ENCODE measurements at regions of chr11 and their contacts with region 1.

Region 1: DNA sequence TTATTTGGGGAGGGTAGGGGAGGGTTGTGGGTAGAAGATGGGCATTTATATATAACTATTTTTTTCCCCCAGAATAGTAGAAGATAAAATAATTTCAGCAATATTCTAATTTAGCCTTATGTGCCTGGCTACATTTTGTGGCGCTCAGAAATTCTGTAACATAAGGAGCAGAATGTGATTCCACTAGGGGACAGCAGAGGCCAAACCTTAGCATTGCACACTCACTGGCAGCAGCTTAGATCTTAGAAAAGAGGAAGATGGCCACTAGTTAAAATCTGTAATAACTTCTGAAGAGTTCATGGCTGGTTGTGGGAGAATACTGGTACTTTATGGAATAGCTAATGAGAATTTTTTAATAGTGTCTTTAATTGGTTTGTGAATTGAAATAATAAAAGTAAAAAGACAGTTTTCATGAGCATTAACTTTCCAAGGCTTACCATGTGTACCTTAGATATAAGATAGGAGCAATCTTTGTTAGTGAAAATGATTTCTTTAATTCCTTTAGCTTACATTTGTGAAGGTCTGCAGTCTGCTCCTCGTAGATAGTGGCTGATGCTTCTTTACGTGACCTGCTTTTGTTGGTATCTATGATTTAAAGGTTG is 33.1 kb downstream of the DDX10 start:
- DNase-seq: peak in 6 of 14 experiments; percentile 16 to 56 (median 33)
- ATAC-seq: peak; percentile 43
- H3K4me3 ChIP-seq: no peak overlapping the region
- H3K4me3 Mint-ChIP-seq: no peak overlapping the region
- H3K27ac ChIP-seq: no peak overlapping the region
- H3K27ac Mint-ChIP-seq: no peak overlapping the region
- H3K4me1 ChIP-seq: no peaks in the 10 kb centered on the region
- H3K4me1 Mint-ChIP-seq: no peaks in the 10 kb centered on the region
- H3K27me3 ChIP-seq: no peaks in the 10 kb centered on the region
- H3K27me3 Mint-ChIP-seq: no peaks in the 10 kb centered on the region
- CTCF ChIP-seq: peak; percentile 46

Region 2: DNA sequence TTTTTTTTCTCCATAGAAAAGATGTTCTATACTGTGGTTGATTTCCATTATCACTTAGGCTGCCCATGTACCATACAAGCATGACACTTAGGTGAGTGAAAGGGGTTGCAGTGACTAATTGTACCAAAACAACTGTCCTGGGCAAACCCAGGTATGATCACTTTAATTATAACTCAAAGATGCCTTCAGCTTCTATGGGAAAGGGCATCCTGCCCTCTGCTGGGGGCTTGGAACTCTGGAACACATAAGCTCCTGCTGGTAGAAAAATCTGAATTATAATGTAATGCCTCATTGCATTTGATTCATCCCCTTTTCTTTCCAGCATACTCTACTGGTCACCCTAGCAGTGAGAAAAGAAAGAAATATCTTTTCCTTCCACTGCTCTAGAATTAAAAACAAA is 173.2 kb after region 1 on chr11:
- CTCF ChIA-PET with region 1: no interaction called
- POLR2A ChIA-PET with region 1: no interaction called
- intact Hi-C with region 1: loop called in 1 of 2 experiments (anchors 5 kb)
- DNase-seq: peak in 4 of 14 experiments; percentile 2 to 26 (median 20)
- ATAC-seq: no peak
- H3K4me3 ChIP-seq: no peak overlapping the region
- H3K4me3 Mint-ChIP-seq: no peak overlapping the region
- H3K27ac ChIP-seq: no peak overlapping the region
- H3K27ac Mint-ChIP-seq: no peak overlapping the region
- H3K4me1 ChIP-seq: no peaks in the 10 kb centered on the region
- H3K4me1 Mint-ChIP-seq: no peaks in the 10 kb centered on the region
- H3K27me3 ChIP-seq: no peaks in the 10 kb centered on the region
- H3K27me3 Mint-ChIP-seq: no peaks in the 10 kb centered on the region
- CTCF ChIP-seq: peak; percentile 17

Region 3: DNA sequence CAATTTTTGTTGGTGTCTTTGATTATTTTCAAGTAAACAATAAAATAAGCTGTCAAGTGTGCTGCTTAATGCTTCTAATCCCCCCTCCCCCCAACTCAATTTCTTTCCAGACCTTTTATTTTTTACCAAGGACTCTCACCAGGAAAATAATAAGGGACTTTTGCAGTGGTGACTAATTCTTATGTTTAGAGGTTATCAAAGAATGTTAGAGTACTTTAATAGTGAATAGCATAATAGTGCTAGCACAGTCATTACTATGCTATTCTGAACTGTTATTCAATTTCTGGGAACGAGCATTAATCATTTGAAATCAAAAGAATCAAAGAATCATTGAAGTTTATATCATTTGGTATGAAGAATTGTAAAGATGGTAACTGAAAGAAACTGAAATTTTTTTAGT is 218.3 kb after region 1 on chr11:
- CTCF ChIA-PET with region 1: no interaction called
- POLR2A ChIA-PET with region 1: no interaction called
- intact Hi-C with region 1: no loop called
- DNase-seq: no peak
- ATAC-seq: no peak
- H3K4me3 ChIP-seq: no peak overlapping the region
- H3K4me3 Mint-ChIP-seq: no peak overlapping the region
- H3K27ac ChIP-seq: no peak overlapping the region
- H3K27ac Mint-ChIP-seq: no peak overlapping the region
- H3K4me1 ChIP-seq: no peaks in the 10 kb centered on the region
- H3K4me1 Mint-ChIP-seq: no peaks in the 10 kb centered on the region
- H3K27me3 ChIP-seq: no peaks in the 10 kb centered on the region
- H3K27me3 Mint-ChIP-seq: no peaks in the 10 kb centered on the region
- CTCF ChIP-seq: no peak

Region 4: GRCh38 chr11:109697140-109697843 is 999.3 kb after region 1 on chr11:
- CTCF ChIA-PET with region 1: no interaction called
- POLR2A ChIA-PET with region 1: no interaction called
- intact Hi-C with region 1: loop called in 1 of 2 experiments (anchors 10 kb)
- DNase-seq: peak in 1 of 14 experiments; percentile 13
- ATAC-seq: no peak
- H3K4me3 ChIP-seq: no peak overlapping the region
- H3K4me3 Mint-ChIP-seq: no peak overlapping the region
- H3K27ac ChIP-seq: no peak overlapping the region
- H3K27ac Mint-ChIP-seq: no peak overlapping the region
- H3K4me1 ChIP-seq: no peaks in the 10 kb centered on the region
- H3K4me1 Mint-ChIP-seq: no peaks in the 10 kb centered on the region
- H3K27me3 ChIP-seq: no peaks in the 10 kb centered on the region
- H3K27me3 Mint-ChIP-seq: no peaks in the 10 kb centered on the region
- CTCF ChIP-seq: no peak

Region 5: DNA sequence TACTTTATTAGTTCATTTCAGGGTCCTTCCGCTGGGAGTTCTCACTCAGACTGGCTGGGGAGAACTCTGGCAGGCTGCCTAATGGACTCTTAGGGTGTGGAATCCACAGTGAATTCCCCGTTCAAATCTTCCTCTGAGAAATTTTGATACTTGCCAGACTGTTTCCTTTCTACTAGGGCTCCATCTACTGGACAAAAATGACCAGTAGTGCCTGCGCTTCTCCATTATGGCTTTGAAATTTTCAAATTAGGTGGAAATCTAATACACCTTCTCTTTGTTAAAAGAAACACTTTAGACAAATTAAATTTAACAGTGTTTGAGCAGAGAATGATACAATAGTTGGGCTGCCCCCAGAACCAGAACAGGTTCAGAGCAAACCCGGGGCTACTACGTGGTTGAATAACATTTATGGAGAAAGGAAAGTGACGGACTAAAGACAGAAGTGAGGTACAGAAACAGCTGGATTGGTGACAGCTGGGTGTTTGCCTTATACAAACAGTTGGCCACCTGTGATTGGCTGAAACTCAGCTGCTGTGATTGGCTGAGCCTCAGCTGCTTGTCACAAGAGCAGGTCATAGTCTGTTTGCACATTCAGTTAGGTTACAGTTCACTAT is 1678.8 kb after region 1 on chr11:
- CTCF ChIA-PET with region 1: no interaction called
- POLR2A ChIA-PET with region 1: no interaction called
- intact Hi-C with region 1: loop called in 1 of 2 experiments (anchors 2 kb)
- DNase-seq: peak in 5 of 14 experiments; percentile 3 to 70 (median 54)
- ATAC-seq: peak; percentile 57
- H3K4me3 ChIP-seq: no peak overlapping the region
- H3K4me3 Mint-ChIP-seq: no peak overlapping the region
- H3K27ac ChIP-seq: no peak overlapping the region
- H3K27ac Mint-ChIP-seq: no peak overlapping the region
- H3K4me1 ChIP-seq: no peaks in the 10 kb centered on the region
- H3K4me1 Mint-ChIP-seq: peaks cover 6% of the 10 kb centered on the region
- H3K27me3 ChIP-seq: no peaks in the 10 kb centered on the region
- H3K27me3 Mint-ChIP-seq: no peaks in the 10 kb centered on the region
- CTCF ChIP-seq: peak; percentile 77

Measured in CD4-positive, alpha-beta T cell (primary cell).